HEK293T (cell line): ENCODE measurements at regions of chr7 and their contacts with region 1.

Region 1: GRCh38 chr7:43729214-43729923 is at the start of gene COA1:
- DNase-seq: peak; percentile 86

Region 2: DNA sequence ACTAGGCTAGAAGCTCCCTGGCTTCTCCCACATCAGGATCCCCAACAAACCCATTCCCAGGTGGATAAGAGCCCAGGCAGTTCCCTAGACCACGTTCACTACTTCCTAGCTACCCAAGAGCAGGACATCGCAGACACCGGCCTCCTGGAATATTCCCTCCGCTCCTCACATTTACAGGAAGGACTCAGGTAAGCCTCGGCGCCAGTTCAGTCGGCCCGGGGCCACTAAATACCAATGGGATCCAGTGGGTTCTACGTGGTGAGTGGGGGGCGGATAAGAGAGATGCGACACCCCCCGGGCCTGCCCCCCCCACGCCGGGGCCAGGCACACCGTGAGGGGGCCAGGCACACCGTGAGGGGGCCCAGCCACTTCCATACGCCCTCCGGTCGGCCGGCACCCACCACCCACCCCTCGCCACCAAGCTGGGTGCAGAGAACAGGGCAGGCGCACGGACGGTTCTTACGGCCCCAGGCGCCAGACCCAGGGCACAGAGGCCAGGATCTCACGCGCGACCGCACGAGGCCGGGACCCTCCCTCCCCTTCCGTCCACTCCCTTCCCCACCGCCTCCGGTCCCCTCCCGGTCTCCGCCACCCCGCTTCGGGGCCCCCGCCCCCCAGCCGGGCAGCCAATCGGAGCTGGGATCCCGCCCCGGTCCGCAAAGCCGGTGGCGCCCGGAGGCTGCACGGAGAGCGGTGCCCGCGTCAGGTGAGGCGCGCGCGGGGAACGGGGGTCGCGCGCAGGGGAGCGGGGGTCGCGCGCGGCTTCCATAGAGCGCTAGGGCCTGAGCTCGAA is 28.9 kb after region 1 on chr7 and contains the start of gene BLVRA:
- CTCF ChIA-PET with region 1: no interaction called
- POLR2A ChIA-PET with region 1: interaction called, 17 read pairs
- DNase-seq: peak; percentile 64

Region 3: GRCh38 chr7:43764039-43764761 is 34.8 kb after region 1 on chr7:
- CTCF ChIA-PET with region 1: no interaction called
- POLR2A ChIA-PET with region 1: interaction called, 17 read pairs
- DNase-seq: no peak